ENCODE measurements at regions of chr6 and their contacts with region 1.

Region 1: GRCh38 chr6:142155895-142156757 is 9.1 kb downstream of the VTA1 start:
- DNase-seq: no peak
- H3K4me3 ChIP-seq: no peak overlapping the region
- H3K27ac ChIP-seq: no peak overlapping the region
- H3K4me1 ChIP-seq: peaks cover 0 to 18% (median 4%) of the 10 kb centered on the region in 3 donors
- H3K27me3 ChIP-seq: no peaks in the 10 kb centered on the region
- CTCF ChIP-seq: peak in 5 of 6 experiments; percentile 15 to 58 (median 40)
- POLR2A ChIP-seq: no peak

Region 2: DNA sequence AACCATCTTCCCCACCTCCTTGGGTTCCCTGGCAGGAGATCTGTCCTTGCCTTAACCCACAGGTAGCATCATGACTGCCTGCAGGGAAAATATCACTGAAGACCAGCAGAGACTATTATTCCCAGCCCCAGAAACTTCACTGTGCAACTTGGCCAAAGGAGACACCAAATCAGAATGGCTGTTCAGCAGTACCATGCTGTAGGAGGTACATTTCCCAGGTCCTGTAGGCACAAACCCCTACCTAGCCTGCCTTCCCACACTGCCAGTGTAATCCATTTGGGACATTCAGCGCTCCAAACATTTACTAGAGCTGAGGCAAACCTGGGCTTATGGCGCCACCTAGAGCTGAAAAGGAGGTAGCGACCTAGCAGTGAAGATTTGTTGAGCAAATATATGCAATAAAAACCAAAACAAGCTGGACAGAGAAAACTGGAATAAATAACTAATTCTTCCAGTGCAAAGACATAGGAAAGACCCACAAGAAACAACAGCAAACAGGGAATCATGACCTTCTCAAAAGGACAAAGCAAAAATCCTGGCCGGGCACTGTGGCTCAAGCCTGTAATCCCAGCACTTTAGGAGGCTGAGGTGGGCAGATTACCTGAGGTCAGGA is 51.2 kb after region 1 on chr6:
- intact Hi-C with region 1: loop called (anchors 10 kb)
- DNase-seq: no peak
- H3K4me3 ChIP-seq: no peak overlapping the region
- H3K27ac ChIP-seq: no peak overlapping the region
- H3K4me1 ChIP-seq: no peaks in the 10 kb centered on the region
- H3K27me3 ChIP-seq: no peaks in the 10 kb centered on the region
- CTCF ChIP-seq: peak; percentile 15 to 82 (median 62)
- POLR2A ChIP-seq: no peak

Region 3: GRCh38 chr6:142387997-142388815 is 232.1 kb after region 1 on chr6:
- intact Hi-C with region 1: loop called (anchors 10 kb)
- DNase-seq: no peak
- H3K4me3 ChIP-seq: no peak overlapping the region
- H3K27ac ChIP-seq: no peak overlapping the region
- H3K4me1 ChIP-seq: no peaks in the 10 kb centered on the region
- H3K27me3 ChIP-seq: no peaks in the 10 kb centered on the region
- CTCF ChIP-seq: peak; percentile 13 to 74 (median 50)
- POLR2A ChIP-seq: no peak

Measured in esophagus squamous epithelium (tissue), 5 donors.